PC-3 (cell line): ENCODE measurements at regions of chr6 and their contacts with region 1.

Region 1: DNA sequence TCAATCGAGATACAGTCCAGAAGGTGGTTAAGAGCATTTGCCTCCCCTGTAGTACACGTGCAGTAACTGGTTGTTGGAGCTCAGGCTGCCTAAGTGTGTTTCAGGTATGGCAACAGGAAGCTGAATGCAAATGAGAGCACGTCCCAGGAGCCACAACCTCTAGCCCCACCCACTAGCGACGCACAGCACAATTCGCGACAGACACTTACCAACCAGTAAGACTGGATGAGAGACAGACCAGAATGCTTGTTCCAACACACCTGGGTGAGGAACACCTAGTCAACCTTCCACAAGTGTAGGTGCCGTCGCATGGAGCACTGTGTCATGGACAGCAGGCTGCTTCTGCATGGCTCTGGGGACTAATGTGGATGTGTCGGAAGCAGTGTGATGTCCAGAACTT is 7.2 kb upstream of the SERPINB1 start:
- DNase-seq: no peak
- ATAC-seq: no peak
- H3K4me3 ChIP-seq: no peak overlapping the region
- H3K27ac ChIP-seq: no peak overlapping the region
- H3K4me1 ChIP-seq: peaks cover 33% of the 10 kb centered on the region
- H3K27me3 ChIP-seq: no peaks in the 10 kb centered on the region
- CTCF ChIP-seq: no peak

Region 2: DNA sequence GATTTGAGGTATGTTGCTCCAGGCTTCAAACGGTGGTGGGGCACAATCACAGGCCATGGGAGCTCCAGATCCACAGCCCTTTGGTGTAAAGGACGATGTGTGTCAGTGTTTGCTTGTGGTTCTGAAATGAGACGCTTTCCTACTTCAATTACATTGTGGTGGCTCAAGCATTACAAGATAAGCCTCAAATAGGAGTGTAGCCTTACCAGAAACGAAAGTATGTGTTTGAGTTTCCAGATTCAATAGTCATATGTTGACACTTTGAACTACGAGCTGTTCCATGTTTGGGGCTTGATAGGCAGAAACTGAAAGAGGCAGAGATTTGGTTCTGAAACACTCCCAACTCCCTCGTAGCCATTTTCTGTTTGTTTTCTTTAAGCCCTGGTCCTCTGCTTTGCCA is 285.2 kb before region 1 on chr6:
- CTCF ChIA-PET with region 1: no interaction called
- POLR2A ChIA-PET with region 1: no interaction called
- intact Hi-C with region 1: no loop called
- DNase-seq: peak; percentile 64
- ATAC-seq: peak; percentile 68
- H3K4me3 ChIP-seq: no peak overlapping the region
- H3K27ac ChIP-seq: peak overlapping the region; percentile 49
- H3K4me1 ChIP-seq: peaks cover 20% of the 10 kb centered on the region
- H3K27me3 ChIP-seq: no peaks in the 10 kb centered on the region
- CTCF ChIP-seq: no peak

Region 3: DNA sequence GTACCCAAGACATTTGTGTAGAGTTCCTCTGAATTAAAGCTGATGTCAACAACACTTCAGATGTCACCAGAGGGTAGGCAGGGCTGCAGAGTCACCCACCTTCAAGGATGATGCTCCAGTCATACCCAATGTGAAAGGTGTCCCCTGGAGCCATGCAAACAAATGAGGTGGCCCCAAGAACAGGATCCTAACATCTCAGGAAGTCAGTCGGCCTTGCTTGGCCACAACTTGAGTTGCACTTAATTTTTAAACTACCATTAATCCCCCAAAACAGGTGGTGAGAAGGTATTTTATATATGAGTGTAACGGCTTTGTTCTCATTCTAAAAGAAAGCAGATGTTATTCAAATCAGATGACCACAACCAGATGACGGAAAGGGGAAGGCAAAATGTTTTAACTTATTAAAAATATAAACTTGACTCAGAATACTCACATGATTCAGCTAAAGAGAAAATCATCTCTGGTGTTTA is 13.9 kb after region 1 on chr6:
- CTCF ChIA-PET with region 1: no interaction called
- POLR2A ChIA-PET with region 1: no interaction called
- intact Hi-C with region 1: no loop called
- DNase-seq: no peak
- ATAC-seq: no peak
- H3K4me3 ChIP-seq: no peak overlapping the region
- H3K27ac ChIP-seq: no peak overlapping the region
- H3K4me1 ChIP-seq: peaks cover 14% of the 10 kb centered on the region
- H3K27me3 ChIP-seq: no peaks in the 10 kb centered on the region
- CTCF ChIP-seq: no peak

Region 4: GRCh38 chr6:2911171-2911570 is 62.3 kb after region 1 on chr6:
- CTCF ChIA-PET with region 1: interaction called, 4 read pairs
- POLR2A ChIA-PET with region 1: no interaction called
- intact Hi-C with region 1: loop called (anchors 1 kb)
- DNase-seq: no peak
- ATAC-seq: no peak
- H3K4me3 ChIP-seq: no peak overlapping the region
- H3K27ac ChIP-seq: no peak overlapping the region
- H3K4me1 ChIP-seq: 0 out of 2 replicates have a peak, but pooled peaks cover 3% of the 10 kb centered on the region
- H3K27me3 ChIP-seq: no peaks in the 10 kb centered on the region
- CTCF ChIP-seq: no peak

Region 5: DNA sequence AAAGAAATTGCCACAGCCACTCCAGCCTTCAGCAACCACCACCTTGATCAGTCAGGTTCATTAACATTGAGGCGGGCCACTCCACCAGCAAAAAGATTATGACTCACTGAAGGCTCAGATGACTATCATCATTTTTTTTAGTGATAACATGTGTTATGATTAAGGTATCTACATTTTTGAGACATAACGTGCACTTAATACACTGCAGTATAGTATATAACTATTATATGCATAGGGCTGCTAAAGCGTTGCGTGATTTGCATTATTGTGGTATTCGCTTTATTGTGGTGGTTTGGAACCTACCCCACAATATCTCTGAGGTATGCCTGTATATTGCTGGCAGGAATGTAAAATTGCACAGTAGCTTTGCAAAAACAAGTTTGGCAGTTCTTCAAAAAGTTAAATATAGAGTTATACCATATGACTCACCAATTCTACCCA is 212.7 kb after region 1 on chr6:
- CTCF ChIA-PET with region 1: no interaction called
- POLR2A ChIA-PET with region 1: no interaction called
- intact Hi-C with region 1: loop called (anchors 5 kb)
- DNase-seq: peak; percentile 93
- ATAC-seq: peak; percentile 18
- H3K4me3 ChIP-seq: no peak overlapping the region
- H3K27ac ChIP-seq: no peak overlapping the region
- H3K4me1 ChIP-seq: peaks cover 14% of the 10 kb centered on the region
- H3K27me3 ChIP-seq: no peaks in the 10 kb centered on the region
- CTCF ChIP-seq: no peak

Region 6: DNA sequence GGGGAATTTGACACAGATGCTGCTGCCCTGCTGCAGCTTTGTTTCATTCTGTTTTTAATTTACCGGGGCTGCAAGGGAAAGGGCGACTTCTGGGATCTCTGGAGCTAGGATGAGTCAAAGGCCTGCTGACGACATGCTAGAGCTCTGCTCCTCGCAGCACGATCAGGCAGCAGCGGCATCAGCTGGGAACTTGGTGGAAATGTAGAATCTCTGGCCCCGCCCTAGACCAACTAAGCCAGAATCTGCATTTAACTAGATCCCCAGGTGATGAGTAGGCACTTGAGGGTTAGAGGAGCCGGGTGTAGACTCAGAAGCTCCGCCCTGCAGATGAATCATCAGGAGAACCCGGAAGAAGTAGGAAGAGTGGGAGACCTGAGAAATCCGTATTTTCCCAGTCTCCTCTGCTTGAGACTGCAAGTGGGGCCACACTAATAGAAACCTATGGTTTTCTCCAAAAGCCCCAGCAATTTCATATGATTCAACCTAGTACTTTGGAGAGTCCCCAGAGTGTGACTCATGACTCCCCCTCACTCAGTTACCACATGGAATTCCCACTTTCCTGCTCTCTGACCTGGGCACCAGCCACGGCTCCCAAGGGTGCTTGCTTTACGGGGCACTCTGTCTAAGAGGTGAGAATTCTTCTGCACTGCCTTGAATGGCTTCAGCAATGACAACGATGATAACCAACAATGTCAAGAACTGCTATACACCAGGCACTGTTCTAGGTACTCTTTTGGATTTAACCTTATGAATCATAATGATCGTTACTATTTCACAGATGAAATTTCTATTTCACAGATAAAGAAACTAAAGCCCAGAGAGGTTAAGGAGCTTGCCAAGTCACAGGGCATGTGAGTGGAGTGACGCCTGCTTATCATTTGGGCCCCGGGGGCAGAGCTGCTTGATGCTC is 360.5 kb after region 1 on chr6:
- CTCF ChIA-PET with region 1: no interaction called
- POLR2A ChIA-PET with region 1: no interaction called
- intact Hi-C with region 1: no loop called
- DNase-seq: peak; percentile 99
- ATAC-seq: peak; percentile 99
- H3K4me3 ChIP-seq: peak overlapping the region; percentile 39
- H3K27ac ChIP-seq: peak overlapping the region; percentile 73
- H3K4me1 ChIP-seq: peaks cover 27% of the 10 kb centered on the region
- H3K27me3 ChIP-seq: no peaks in the 10 kb centered on the region
- CTCF ChIP-seq: peak; percentile 52